Activated B cell treated with CpG ODN at 0.5 μM for 24 hours (primary cell): ENCODE measurements at regions of chr13 and their contacts with region 1.

Region 1: GRCh38 chr13:50801087-50801931 is 42.2 kb downstream of the DLEU7 start:
- DNase-seq: peak; percentile 39
- ATAC-seq: peak; percentile 74
- H3K4me3 Mint-ChIP-seq: peak overlapping the region; percentile 64
- H3K27ac Mint-ChIP-seq: peak overlapping the region; percentile 95
- H3K4me1 Mint-ChIP-seq: peaks cover 40% of the 10 kb centered on the region
- H3K27me3 Mint-ChIP-seq: no peaks in the 10 kb centered on the region
- CTCF ChIP-seq: no peak

Region 2: DNA sequence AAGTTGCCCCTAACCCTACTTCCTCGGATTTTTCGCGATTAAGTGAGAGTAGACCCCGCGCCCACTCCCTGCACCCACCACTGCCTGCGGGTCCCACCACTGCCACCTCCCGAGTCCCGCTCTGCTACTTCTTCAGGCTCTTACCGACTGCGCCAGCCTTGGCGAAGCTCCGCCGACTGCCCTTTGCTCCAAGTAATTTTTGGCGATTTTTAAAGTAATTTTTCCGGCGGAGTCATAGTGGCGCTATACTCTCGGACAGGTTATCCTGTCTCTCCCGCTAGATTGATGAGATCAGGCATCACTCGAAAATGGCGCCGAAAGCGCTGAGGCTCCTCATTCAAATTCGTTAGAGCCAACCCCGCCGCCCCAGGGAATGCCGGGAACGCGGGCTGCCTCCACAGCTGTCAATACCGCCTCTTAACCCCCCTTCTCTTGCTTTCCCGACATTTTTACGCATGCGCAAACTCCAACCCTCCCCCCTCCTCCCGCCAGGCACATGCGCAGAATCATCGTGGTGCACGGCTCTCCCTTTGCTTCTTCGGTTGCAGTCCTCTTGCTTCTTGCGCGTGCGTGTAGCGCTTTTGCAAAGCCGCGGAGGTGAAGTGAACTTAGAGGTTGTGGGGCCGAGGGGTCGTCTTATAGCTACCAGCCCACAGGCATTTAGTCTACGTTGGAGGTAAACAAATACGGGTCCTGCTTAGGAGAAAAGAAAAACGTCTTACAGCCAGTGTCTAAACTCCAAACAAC is 719.5 kb before region 1 on chr13:
- CTCF ChIA-PET with region 1: interaction called, 42 read pairs
- POLR2A ChIA-PET with region 1: interaction called, 45 read pairs
- intact Hi-C with region 1: loop called (anchors 1 kb)
- DNase-seq: peak; percentile 95
- ATAC-seq: peak; percentile 73
- H3K4me3 Mint-ChIP-seq: peak overlapping the region; percentile 100
- H3K27ac Mint-ChIP-seq: peak overlapping the region; percentile 100
- H3K4me1 Mint-ChIP-seq: peaks cover 62% of the 10 kb centered on the region
- H3K27me3 Mint-ChIP-seq: no peaks in the 10 kb centered on the region
- CTCF ChIP-seq: no peak

Region 3: DNA sequence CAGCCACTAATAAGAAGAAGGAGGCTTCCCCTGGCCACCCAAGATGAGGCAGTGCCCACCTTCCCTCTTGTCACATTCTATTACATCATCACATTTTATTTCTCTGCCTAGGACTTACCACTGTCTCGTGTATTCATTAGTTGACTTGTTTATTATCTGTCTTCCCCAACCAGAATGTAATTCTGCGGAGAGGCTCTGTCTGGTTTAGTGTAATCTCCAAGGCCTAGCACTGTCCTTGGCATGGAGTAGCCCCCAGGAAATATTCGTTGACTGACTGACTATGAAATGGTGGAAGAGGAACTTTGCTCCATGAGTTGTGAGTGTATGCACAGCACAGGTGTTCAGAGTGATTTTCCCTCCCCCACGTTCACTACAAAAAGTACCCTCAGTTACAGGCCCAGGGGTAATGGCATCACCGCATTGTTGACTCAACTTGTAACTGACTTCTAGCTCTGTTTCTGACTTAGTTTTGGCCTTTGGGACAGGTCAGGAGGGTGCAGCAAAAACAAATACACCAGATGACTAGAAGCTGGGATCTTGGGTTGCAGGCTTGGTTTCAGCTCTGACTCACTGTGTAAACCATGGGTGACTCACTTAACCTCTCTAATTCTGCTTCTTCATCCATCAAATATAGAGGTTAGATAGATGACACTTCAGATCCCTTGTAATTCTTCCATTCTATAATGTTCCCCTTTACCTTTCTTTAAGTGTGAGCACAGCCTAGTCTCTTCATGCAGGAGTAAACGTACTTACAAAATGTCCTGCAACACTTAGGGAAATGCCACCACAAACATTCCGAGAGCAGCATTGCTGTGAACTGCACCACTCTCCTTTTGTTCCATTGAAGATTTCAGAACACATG is 556.4 kb before region 1 on chr13:
- CTCF ChIA-PET with region 1: interaction called, 4 read pairs
- POLR2A ChIA-PET with region 1: interaction called, 8 read pairs
- intact Hi-C with region 1: loop called (anchors 1 kb)
- DNase-seq: no peak
- ATAC-seq: peak; percentile 92
- H3K4me3 Mint-ChIP-seq: peak overlapping the region; percentile 2
- H3K27ac Mint-ChIP-seq: peak overlapping the region; percentile 91
- H3K4me1 Mint-ChIP-seq: peaks cover 40% of the 10 kb centered on the region
- H3K27me3 Mint-ChIP-seq: no peaks in the 10 kb centered on the region
- CTCF ChIP-seq: no peak

Region 4: GRCh38 chr13:50512474-50513299 is 288.6 kb before region 1 on chr13:
- CTCF ChIA-PET with region 1: interaction called, 12 read pairs
- POLR2A ChIA-PET with region 1: interaction called, 11 read pairs
- intact Hi-C with region 1: loop called (anchors 2 kb)
- DNase-seq: peak; percentile 40
- ATAC-seq: peak; percentile 81
- H3K4me3 Mint-ChIP-seq: no peak overlapping the region
- H3K27ac Mint-ChIP-seq: no peak overlapping the region
- H3K4me1 Mint-ChIP-seq: peaks cover 3% of the 10 kb centered on the region
- H3K27me3 Mint-ChIP-seq: no peaks in the 10 kb centered on the region
- CTCF ChIP-seq: no peak

Region 5: DNA sequence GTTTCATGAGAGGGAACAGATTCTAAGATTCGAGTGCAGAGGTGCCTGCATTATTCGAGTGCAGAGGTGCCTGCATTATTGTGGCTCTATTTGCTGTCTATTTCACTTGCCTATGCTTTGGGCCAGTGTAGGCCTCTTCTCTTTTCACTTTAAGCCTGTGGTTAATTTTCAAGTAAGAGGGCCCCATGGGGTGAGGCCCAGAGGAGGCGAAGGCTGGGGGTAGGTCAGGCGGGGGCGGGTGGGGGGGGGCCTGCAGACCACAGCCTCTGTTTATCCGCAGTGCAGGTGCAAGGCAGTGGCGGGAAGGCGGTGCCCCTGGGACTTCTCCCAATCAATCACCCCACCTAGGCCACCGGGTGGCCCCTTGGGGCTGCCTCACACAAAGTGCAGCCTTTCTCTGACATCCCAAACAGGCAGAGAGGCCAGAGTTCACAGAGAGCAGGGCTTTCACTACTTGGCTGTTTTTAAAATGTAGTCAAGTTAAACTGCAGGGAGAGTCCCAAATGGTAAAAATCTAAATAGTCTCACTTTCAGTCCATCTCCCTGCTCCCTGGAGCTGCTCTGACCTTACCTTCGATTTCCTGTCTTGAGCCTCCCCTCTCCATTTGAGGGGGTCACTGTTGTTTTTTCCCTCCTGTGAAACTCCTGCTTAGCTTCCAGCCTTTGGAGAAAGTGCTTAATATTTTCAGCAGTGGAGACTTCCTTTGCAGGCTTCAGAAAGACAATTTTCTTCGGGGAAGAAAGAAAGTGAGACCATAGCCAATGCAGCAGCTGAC is 206.8 kb before region 1 on chr13:
- CTCF ChIA-PET with region 1: interaction called, 12 read pairs
- POLR2A ChIA-PET with region 1: interaction called, 56 read pairs
- intact Hi-C with region 1: loop called (anchors 1 kb)
- DNase-seq: peak; percentile 76
- ATAC-seq: peak; percentile 88
- H3K4me3 Mint-ChIP-seq: peak overlapping the region; percentile 73
- H3K27ac Mint-ChIP-seq: peak overlapping the region; percentile 98
- H3K4me1 Mint-ChIP-seq: peaks cover 95% of the 10 kb centered on the region
- H3K27me3 Mint-ChIP-seq: no peaks in the 10 kb centered on the region
- CTCF ChIP-seq: no peak

Region 6: GRCh38 chr13:50713523-50714248 is 87.6 kb before region 1 on chr13:
- CTCF ChIA-PET with region 1: interaction called, 4 read pairs
- POLR2A ChIA-PET with region 1: interaction called, 11 read pairs
- intact Hi-C with region 1: no loop called
- DNase-seq: no peak
- ATAC-seq: peak; percentile 78
- H3K4me3 Mint-ChIP-seq: peak overlapping the region; percentile 70
- H3K27ac Mint-ChIP-seq: peak overlapping the region; percentile 70
- H3K4me1 Mint-ChIP-seq: peaks cover 31% of the 10 kb centered on the region
- H3K27me3 Mint-ChIP-seq: no peaks in the 10 kb centered on the region
- CTCF ChIP-seq: no peak

Region 7: GRCh38 chr13:51502153-51502651 is 700.9 kb after region 1 on chr13:
- CTCF ChIA-PET with region 1: no interaction called
- POLR2A ChIA-PET with region 1: no interaction called
- intact Hi-C with region 1: no loop called
- DNase-seq: no peak
- ATAC-seq: peak; percentile 74
- H3K4me3 Mint-ChIP-seq: no peak overlapping the region
- H3K27ac Mint-ChIP-seq: peak overlapping the region; percentile 61
- H3K4me1 Mint-ChIP-seq: peaks cover 15% of the 10 kb centered on the region
- H3K27me3 Mint-ChIP-seq: no peaks in the 10 kb centered on the region
- CTCF ChIP-seq: no peak